ENCODE measurements at regions of chr15 and their contacts with region 1.

Region 1: DNA sequence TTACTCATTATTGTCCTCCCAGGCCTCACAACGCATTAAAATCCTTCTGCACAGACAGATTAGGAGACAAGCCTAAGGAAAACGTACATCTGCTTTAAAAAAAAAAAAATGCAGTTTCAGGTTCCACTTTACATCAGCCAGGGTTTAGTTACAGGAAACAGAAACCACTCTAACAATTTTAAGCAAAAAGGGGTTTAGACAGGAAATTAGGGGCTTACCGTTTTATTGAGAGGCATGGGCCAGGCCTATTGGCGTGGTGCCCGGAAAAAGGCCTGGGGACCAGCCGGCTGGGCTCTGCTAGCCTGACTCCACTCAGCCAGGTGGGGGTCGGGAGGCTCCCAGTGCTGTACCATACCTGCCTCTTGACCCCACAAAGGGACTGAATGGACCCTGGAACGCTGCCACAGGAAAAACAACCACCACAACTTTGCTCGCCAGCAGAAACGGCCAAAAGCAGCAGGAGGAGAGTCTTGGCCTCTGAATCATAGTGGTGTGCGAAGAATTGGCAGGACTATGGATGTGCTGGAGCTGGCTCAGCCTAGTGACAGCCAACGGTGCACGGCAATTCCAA is 124.3 kb downstream of the CHSY1 start:
- DNase-seq: peak; percentile 88 to 92 (median 89)
- ATAC-seq: peak; percentile 95 to 96
- H3K4me3 ChIP-seq: no peak overlapping the region
- H3K27ac ChIP-seq: peak overlapping the region; percentile 83
- H3K4me1 ChIP-seq: peaks cover 5% of the 10 kb centered on the region
- H3K27me3 ChIP-seq: no peaks in the 10 kb centered on the region

Region 2: DNA sequence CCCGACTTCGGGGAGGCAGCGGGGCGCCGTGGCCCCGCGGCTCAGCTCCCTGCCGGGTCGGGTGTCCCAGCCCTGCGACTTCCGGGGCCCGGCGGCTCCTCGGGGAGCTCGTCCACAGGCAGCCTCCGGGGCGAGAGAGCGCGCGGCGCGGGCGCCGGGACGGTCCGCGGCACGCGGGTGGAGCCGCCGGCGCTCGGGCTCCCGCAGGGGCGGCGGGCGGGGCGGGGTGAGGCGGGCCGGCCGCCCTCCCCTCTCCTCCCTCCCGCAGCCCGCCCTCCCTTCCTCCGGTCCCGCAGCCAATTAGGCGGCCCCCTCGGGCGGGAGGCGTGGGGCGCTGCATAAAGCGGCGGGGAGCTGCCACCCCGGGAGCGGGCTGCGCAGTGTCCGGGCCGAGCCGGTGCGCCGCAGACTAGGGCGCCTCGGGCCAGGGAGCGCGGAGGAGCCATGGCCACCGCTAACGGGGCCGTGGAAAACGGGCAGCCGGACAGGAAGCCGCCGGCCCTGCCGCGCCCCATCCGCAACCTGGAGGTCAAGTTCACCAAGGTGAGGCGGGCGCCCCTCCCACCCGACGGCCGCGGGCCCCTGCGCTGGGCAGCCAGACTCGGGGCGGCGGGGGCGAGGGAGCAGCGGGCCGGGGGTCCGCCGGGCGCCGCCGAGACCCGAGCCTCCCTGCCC is 248.0 kb before region 1 on chr15 and contains the start of gene ALDH1A3:
- intact Hi-C with region 1: no loop called
- DNase-seq: peak; percentile 50 to 81 (median 77)
- ATAC-seq: peak; percentile 73 to 84
- H3K4me3 ChIP-seq: peak within 1 kb of the TSS; percentile 83
- H3K27ac ChIP-seq: no peak within 1 kb of the TSS
- H3K4me1 ChIP-seq: no peaks in the 10 kb centered on the region
- H3K27me3 ChIP-seq: no peaks in the 10 kb centered on the region
- total RNA-seq, gene ALDH1A3: 8.4 to 10.3 (median 9.2) TPM

Region 3: GRCh38 chr15:101088788-101089583 is 38.6 kb before region 1 on chr15:
- intact Hi-C with region 1: no loop called
- DNase-seq: peak; percentile 76 to 90 (median 90)
- ATAC-seq: peak; percentile 60 to 67
- H3K4me3 ChIP-seq: no peak overlapping the region
- H3K27ac ChIP-seq: no peak overlapping the region
- H3K4me1 ChIP-seq: peaks cover 12% of the 10 kb centered on the region
- H3K27me3 ChIP-seq: no peaks in the 10 kb centered on the region

Region 4: GRCh38 chr15:101201406-101202174 is 74.0 kb after region 1 on chr15:
- intact Hi-C with region 1: loop called in 1 of 4 experiments (anchors 10 kb)
- DNase-seq: peak; percentile 95 to 96 (median 96)
- ATAC-seq: peak; percentile 95 to 98
- H3K4me3 ChIP-seq: no peak overlapping the region
- H3K27ac ChIP-seq: peak overlapping the region; percentile 65
- H3K4me1 ChIP-seq: peaks cover 21% of the 10 kb centered on the region
- H3K27me3 ChIP-seq: no peaks in the 10 kb centered on the region

Region 5: DNA sequence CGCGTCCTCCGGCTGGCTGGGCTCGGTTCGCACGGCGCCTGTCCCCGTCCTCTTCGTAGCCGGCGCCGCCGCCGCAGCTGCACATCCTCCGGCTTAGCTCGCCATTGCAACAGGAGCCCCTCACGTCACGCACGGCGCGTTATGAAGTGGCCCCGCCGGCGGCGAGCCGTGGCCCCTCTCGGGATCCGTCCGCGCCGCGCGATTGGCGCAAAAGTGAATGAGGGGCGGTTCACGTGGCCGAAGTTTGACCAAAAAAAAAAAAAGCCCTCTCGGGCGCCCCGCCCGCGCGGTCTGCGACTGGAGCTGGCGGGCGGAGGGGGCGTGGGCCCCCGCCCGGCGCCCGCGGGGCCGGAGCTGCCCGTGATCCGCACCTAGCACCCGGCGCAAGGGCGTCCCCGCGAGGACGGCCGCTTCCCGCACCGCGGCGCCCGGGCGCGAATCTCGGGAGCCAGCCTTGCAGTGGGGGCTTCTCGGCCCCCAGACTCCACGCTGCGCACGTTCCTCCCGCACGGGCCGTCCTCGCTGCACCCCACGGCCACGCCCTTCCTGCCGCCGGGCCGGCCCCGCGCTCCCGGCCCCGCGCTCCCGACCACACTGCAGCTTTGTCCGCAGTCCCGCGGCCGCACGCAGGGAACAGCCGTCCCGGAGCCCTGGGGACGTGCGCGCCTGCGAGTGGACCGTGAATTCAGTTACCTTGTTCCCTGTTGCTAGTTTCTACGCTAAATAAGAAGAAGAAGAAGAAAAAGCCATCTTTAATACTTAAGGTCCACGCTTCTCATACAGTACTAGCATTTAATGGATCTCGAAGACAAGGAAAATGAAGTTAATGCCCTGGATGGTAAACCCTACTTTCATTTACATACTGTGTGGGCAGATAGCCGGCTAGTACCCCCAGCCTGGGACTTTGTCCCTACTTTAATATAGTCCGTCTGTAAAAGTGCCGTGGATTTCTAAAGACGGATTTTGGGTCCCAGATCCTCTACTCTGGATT is 124.5 kb after region 1 on chr15 and contains the start of gene CHSY1:
- intact Hi-C with region 1: loop called in 1 of 4 experiments (anchors 10 kb)
- DNase-seq: peak; percentile 96 to 98 (median 97)
- ATAC-seq: peak; percentile 82 to 89
- H3K4me3 ChIP-seq: peak within 1 kb of the TSS; percentile 80
- H3K27ac ChIP-seq: peak within 1 kb of the TSS; percentile 82
- H3K4me1 ChIP-seq: peaks cover 3% of the 10 kb centered on the region
- H3K27me3 ChIP-seq: no peaks in the 10 kb centered on the region
- total RNA-seq, gene CHSY1: 24.5 to 44.7 (median 28.9) TPM

Measured in right cardiac atrium (tissue), 5 donors.